ENCODE measurements at regions of chr2 and their contacts with region 1.

Region 1: DNA sequence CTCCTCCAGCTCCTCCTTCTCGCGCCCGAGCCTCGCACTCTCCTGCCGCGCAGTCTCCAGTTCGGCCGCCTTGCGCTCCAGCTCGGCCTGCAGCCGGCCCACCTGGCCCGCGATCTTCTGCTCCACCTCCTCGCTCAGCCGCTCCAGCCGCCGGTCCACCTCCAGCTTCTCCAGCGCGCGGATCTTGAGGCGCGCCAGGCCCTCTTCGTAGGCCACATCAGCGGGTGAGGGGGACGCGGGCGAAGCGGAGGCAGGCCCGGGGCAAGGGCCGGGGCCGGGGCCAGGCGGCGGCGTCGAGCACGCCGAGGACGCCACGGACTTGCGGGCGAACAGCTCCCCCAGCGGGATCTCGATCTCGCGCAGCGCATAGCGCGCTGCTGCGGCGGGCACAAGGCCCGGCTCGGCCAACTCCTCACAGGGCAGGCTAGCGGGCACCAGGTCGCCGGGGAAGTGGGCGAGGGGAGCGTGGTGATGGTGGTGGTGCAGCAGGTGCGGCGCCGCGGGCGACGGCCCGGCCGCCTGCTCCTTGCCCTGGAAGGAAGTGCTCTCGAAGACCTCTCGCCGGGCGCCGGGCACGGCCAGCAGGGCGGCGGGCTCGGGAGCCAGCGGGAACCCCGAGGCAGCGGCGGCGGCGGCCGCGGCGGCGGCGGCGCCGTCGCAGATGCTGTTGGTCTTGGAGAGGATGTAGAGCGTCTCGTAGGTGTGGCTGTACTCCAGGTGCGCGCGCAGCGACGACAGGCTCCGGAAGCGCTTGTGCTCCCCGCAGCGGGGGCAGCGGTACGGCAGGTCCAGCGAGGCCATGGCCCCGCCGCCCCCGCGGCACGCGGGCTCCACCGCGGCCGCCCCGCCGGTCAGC is 15.2 kb downstream of the FBXO41 start:
- DNase-seq: peak; percentile 82
- ATAC-seq: peak; percentile 78
- H3K4me3 Mint-ChIP-seq: peak overlapping the region; percentile 51
- H3K27ac Mint-ChIP-seq: no peak overlapping the region
- H3K4me1 Mint-ChIP-seq: peaks cover 14% of the 10 kb centered on the region
- H3K27me3 Mint-ChIP-seq: peaks cover 36% of the 10 kb centered on the region
- CTCF ChIP-seq: no peak

Region 2: DNA sequence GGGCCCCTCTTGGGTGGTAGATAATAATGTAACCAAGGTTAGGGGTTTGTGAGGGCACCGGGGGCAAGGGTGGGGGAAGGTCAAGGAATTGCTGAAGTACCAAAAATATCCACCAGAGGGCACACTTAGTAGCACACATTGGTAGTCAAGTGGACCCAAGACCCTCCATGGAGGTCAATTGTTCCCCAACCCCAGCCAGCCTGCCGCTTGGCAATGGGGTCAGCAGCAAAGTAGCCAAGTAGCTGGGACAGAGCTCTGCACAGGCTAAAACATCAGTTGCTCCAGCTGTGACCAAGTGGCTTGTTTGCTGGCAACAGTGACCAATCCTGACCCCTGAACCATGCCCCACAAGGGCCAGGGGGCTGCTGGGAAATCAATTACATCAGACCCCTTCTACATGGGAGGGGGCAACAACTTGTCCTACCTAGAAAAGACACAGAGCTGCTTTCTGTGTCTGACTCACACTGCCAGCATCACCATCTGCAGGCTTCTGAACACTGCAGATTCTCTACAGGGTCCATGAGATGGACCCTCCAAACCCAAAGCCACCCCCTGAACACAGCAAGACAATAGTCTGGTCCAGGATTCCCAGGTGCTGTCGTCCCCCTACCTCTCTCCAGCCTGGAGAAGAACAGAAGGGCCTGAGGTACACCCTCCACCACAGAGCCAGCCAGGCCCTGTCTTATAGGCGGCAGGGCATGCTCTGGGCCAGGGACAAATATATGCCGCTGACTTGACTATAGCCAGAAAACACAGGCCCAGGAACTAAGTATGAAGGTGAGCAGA is 275.7 kb before region 1 on chr2:
- CTCF ChIA-PET with region 1: no interaction called
- POLR2A ChIA-PET with region 1: no interaction called
- DNase-seq: peak; percentile 59
- ATAC-seq: peak; percentile 72
- H3K4me3 Mint-ChIP-seq: no peak overlapping the region
- H3K27ac Mint-ChIP-seq: 0 out of 2 replicates have a peak overlapping the region, but pooled peaks have one; percentile 57
- H3K4me1 Mint-ChIP-seq: peaks cover 11% of the 10 kb centered on the region; the same call in 1 of the 2 replicates
- H3K27me3 Mint-ChIP-seq: no peaks in the 10 kb centered on the region; the same call in 1 of the 2 replicates
- CTCF ChIP-seq: peak; percentile 89

Region 3: GRCh38 chr2:73006969-73007710 is 261.9 kb before region 1 on chr2:
- CTCF ChIA-PET with region 1: no interaction called
- POLR2A ChIA-PET with region 1: no interaction called
- DNase-seq: no peak
- ATAC-seq: no peak
- H3K4me3 Mint-ChIP-seq: no peak overlapping the region
- H3K27ac Mint-ChIP-seq: peak overlapping the region; percentile 2
- H3K4me1 Mint-ChIP-seq: 0 out of 2 replicates have a peak, but pooled peaks cover 4% of the 10 kb centered on the region
- H3K27me3 Mint-ChIP-seq: no peaks in the 10 kb centered on the region
- CTCF ChIP-seq: no peak

Region 4: DNA sequence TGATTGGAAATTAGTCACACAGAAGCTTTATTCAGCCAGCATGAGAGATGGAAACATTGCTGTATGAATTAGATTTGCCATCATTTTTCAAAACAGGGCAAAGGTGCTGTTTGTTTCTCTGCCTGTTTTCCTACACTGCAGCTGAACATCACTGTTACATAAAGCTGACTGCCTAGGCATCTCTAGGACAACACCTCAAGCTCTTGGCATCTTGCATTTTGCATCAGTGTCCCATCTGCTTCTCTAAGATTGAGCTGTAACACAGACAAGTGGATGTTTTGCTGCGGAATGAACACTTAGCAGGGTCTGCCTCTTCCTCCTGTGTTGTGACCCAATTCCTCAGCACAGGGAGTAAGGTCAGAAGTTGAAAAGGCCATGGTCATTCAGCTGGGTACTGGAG is 30.1 kb before region 1 on chr2:
- CTCF ChIA-PET with region 1: interaction called, 7 read pairs
- POLR2A ChIA-PET with region 1: interaction called, 12 read pairs
- DNase-seq: no peak
- ATAC-seq: no peak
- H3K4me3 Mint-ChIP-seq: no peak overlapping the region
- H3K27ac Mint-ChIP-seq: peak overlapping the region; percentile 98
- H3K4me1 Mint-ChIP-seq: peaks cover 31% of the 10 kb centered on the region
- H3K27me3 Mint-ChIP-seq: no peaks in the 10 kb centered on the region
- CTCF ChIP-seq: no peak

Region 5: GRCh38 chr2:73402386-73403103 is 133.5 kb after region 1 on chr2:
- CTCF ChIA-PET with region 1: no interaction called
- POLR2A ChIA-PET with region 1: no interaction called
- DNase-seq: no peak
- ATAC-seq: no peak
- H3K4me3 Mint-ChIP-seq: no peak overlapping the region
- H3K27ac Mint-ChIP-seq: no peak overlapping the region
- H3K4me1 Mint-ChIP-seq: no peaks in the 10 kb centered on the region
- H3K27me3 Mint-ChIP-seq: no peaks in the 10 kb centered on the region
- CTCF ChIP-seq: no peak

Measured in WTC11 (cell line).